Right ventricle myocardium inferior (tissue), 1 donor: ENCODE measurements at regions of chr11 and their contacts with region 1.

Region 1: GRCh38 chr11:83836883-83837654 is 550.9 kb upstream of the CCDC90B start:
- DNase-seq: no peak
- ATAC-seq: peak; percentile 80

Region 2: GRCh38 chr11:84384731-84385130 is 547.7 kb after region 1 on chr11:
- intact Hi-C with region 1: loop called (anchors 10 kb)
- DNase-seq: no peak
- ATAC-seq: no peak